Pancreas (tissue), 10 donors: ENCODE measurements at regions of chr11 and their contacts with region 1.

Region 1: GRCh38 chr11:32418836-32419235 is 16.5 kb downstream of the WT1 start:
- DNase-seq: no peak
- ATAC-seq: no peak
- H3K4me3 ChIP-seq: no peak overlapping the region
- H3K27ac ChIP-seq: no peak overlapping the region
- H3K4me1 ChIP-seq: no peaks in the 10 kb centered on the region
- H3K27me3 ChIP-seq: peaks cover 0 to 6% (median 0%) of the 10 kb centered on the region in 4 donors
- CTCF ChIP-seq: no peak

Region 2: DNA sequence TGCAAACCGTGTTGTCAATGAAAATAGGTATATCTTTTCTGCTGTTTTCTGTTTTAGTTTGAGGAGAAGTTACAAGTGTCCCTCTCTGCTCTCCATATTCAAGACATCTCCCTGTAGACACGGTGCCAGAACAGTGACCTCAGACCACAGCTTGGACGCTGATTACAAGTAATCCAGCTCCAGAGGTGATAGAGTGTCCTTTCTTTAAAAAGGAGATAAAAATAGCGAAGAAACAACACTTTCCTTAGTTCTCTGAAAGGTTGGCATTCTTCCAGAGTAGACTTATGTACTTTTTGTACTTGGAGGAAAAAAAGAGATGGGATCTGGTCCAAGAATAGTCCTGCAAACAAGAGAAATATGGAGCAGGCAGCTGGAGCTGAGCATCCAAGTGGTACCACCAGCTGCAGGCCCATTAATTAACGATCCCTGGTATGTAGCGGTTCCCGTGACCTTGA is 59.5 kb after region 1 on chr11:
- intact Hi-C with region 1: loop called in 1 of 3 experiments (anchors 10 kb)
- DNase-seq: no peak
- ATAC-seq: no peak
- H3K4me3 ChIP-seq: no peak overlapping the region
- H3K27ac ChIP-seq: no peak overlapping the region
- H3K4me1 ChIP-seq: no peaks in the 10 kb centered on the region
- H3K27me3 ChIP-seq: no peaks in the 10 kb centered on the region
- CTCF ChIP-seq: no peak

Region 3: DNA sequence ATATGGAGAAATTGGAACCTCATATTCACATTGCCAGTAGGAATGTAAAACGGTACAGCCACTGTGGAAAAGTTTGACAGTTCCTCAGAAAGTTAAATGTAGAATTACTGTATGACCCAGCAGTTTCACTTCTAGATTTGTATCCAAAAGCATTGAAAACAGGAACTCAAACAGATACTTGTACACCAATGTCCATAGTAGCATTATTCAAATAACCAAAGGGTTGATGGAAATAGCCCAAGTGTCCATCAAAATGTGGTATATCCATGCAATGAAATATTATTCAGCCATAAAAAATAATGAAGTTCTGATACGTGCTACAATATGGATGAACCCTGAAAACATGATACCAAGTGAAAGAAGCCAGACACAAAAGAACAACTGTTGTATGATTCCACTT is 428.7 kb after region 1 on chr11:
- intact Hi-C with region 1: no loop called
- DNase-seq: no peak
- ATAC-seq: no peak
- H3K4me3 ChIP-seq: no peak overlapping the region
- H3K27ac ChIP-seq: no peak overlapping the region
- H3K4me1 ChIP-seq: no peaks in the 10 kb centered on the region
- H3K27me3 ChIP-seq: no peaks in the 10 kb centered on the region
- CTCF ChIP-seq: no peak